Uterus (tissue), 4 donors: ENCODE measurements at regions of chr9 and their contacts with region 1.

Region 1: DNA sequence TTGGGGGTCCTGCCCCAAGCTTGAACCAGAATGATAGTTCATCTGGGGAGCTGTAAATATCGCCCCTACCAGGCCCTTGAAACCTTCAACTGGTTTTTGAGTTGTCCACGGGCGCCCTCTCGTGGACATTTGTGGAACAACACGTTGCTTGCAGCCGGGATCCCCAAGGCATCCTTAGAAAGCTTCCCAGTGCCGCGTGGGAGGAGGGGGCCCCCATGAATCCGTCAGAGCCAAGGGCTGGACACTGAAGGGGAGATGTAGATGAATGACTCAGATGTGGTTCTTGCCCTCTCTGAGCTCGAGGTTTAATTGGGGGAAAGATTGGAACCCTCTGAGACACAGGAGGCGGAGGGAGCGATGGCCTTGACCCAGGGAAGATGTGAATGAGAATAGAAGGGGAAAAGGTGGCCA is 31.8 kb upstream of the ORM1 start:
- DNase-seq: peak; percentile 76 to 82
- H3K4me3 ChIP-seq: no peak overlapping the region
- H3K27ac ChIP-seq: no peak overlapping the region
- H3K4me1 ChIP-seq: no peaks in the 10 kb centered on the region
- H3K27me3 ChIP-seq: no peaks in the 10 kb centered on the region
- CTCF ChIP-seq: peak; percentile 87 to 94 (median 88)
- POLR2A ChIP-seq: no peak

Region 2: GRCh38 chr9:114155263-114155972 is 135.7 kb before region 1 on chr9 and contains the start of gene COL27A1:
- intact Hi-C with region 1: loop called (anchors 2 kb)
- DNase-seq: peak; percentile 86 to 90
- H3K4me3 ChIP-seq: peak within 1 kb of the TSS; percentile 48 to 69
- H3K27ac ChIP-seq: peak within 1 kb of the TSS; percentile 81 to 86
- H3K4me1 ChIP-seq: peaks cover 0 to 17% of the 10 kb centered on the region in 2 donors
- H3K27me3 ChIP-seq: no peaks in the 10 kb centered on the region
- CTCF ChIP-seq: peak; percentile 92 to 98 (median 96)
- POLR2A ChIP-seq: peak in 1 of 2 donors; percentile 27
- total RNA-seq, gene COL27A1: 7.9 to 52.9 (median 43.3) TPM

Region 3: DNA sequence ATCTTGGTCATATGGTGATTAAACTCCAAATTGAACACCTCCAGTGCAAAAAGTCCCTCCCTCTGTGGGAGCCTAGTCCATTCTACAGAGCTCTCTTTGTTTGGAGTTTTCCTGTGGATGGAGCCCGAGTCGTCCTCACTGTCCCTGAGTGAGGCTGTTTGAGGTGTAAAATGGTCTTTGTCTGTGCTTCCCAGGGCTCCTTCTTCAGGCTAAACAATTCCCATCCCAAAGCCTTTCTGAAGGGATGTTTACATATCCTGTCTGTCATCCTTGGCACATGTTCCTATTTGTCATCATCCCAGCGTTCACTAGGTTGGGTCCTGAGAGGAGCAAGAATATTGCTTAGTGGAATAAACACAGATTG is 66.8 kb before region 1 on chr9:
- intact Hi-C with region 1: no loop called
- DNase-seq: no peak
- H3K4me3 ChIP-seq: no peak overlapping the region
- H3K27ac ChIP-seq: no peak overlapping the region
- H3K4me1 ChIP-seq: no peaks in the 10 kb centered on the region
- H3K27me3 ChIP-seq: no peaks in the 10 kb centered on the region
- CTCF ChIP-seq: no peak
- POLR2A ChIP-seq: no peak